Thyroid gland (tissue), 4 donors: ENCODE measurements at regions of chr20 and their contacts with region 1.

Region 1: DNA sequence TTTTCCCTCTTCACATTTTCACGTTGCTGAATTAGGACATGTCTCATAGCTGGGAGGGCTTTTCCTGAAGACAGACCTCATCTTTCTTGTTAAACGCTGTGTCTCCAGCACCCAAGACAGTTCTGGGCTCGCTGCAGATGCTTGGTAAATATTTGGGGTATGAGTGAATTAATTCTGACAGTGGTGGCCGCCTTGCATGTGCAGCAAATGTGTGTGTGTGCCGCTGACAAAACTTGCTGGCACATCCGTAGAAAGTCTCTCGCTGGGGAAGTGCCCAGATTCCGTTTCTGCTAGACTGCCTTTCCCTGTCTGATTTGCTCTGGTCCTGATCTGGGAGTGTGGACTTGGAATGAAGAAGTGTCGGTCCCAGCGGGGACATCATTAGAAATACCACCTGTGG is 48.2 kb upstream of the ZNFX1 start:
- DNase-seq: peak in 1 of 2 donors; percentile 29
- H3K4me3 ChIP-seq: no peak overlapping the region
- H3K27ac ChIP-seq: no peak overlapping the region
- H3K4me1 ChIP-seq: peaks cover 0 to 4% of the 10 kb centered on the region in 2 donors
- H3K27me3 ChIP-seq: no peaks in the 10 kb centered on the region
- CTCF ChIP-seq: no peak
- POLR2A ChIP-seq: no peak

Region 2: GRCh38 chr20:49245921-49246740 is 79.9 kb before region 1 on chr20:
- intact Hi-C with region 1: loop called (anchors 5 kb)
- DNase-seq: peak; percentile 21 to 39
- H3K4me3 ChIP-seq: no peak overlapping the region
- H3K27ac ChIP-seq: no peak overlapping the region
- H3K4me1 ChIP-seq: no peaks in the 10 kb centered on the region
- H3K27me3 ChIP-seq: no peaks in the 10 kb centered on the region
- CTCF ChIP-seq: peak in 5 of 6 experiments; percentile 49 to 70 (median 64)
- POLR2A ChIP-seq: no peak